Heart left ventricle (tissue), 16 donors: ENCODE measurements at regions of chr11 and their contacts with region 1.

Region 1: GRCh38 chr11:30365793-30366517 is 43.1 kb downstream of the ARL14EP start:
- DNase-seq: no peak
- ATAC-seq: no peak
- H3K4me3 ChIP-seq: no peak overlapping the region
- H3K27ac ChIP-seq: no peak overlapping the region
- H3K4me1 ChIP-seq: peaks cover 0 to 12% (median 0%) of the 10 kb centered on the region in 12 donors
- H3K27me3 ChIP-seq: no peaks in the 10 kb centered on the region
- CTCF ChIP-seq: no peak
- POLR2A ChIP-seq: no peak

Region 2: GRCh38 chr11:30381879-30382278 is 15.9 kb after region 1 on chr11:
- intact Hi-C with region 1: loop called in 1 of 10 experiments (anchors 1 kb)
- DNase-seq: no peak
- ATAC-seq: no peak
- H3K4me3 ChIP-seq: no peak overlapping the region
- H3K27ac ChIP-seq: no peak overlapping the region
- H3K4me1 ChIP-seq: no peaks in the 10 kb centered on the region
- H3K27me3 ChIP-seq: no peaks in the 10 kb centered on the region
- CTCF ChIP-seq: no peak
- POLR2A ChIP-seq: no peak